ENCODE measurements at regions of chr3 and their contacts with region 1.

Region 1: DNA sequence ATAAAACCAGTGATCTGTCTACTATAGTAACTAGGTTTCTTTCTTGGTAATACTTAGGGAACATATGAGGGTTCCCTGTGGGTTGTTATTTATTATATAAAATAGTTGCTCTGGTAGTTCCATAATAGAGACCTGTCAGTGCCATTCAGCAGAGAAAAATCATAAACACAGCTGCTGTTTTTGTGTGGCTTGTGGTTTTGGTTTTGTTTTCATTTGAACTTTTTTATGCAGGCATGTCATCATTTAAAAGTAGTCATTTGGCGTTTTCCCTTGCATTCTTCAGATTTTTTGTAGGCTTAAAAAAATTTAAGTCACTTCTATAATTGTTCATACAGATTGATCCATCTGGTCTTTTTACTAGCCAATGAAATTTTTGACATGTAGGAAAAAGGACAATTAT is 47.9 kb downstream of the PIK3CA start:
- DNase-seq: no peak
- ATAC-seq: peak in 2 of 8 donors; percentile 31 to 35
- H3K4me3 ChIP-seq: no peak overlapping the region
- H3K27ac ChIP-seq: peak overlapping the region in 2 of 10 donors; percentile 23 to 41
- H3K4me1 ChIP-seq: peaks cover 0 to 58% (median 42%) of the 10 kb centered on the region in 9 donors
- H3K27me3 ChIP-seq: no peaks in the 10 kb centered on the region
- CTCF ChIP-seq: no peak

Region 2: GRCh38 chr3:178090899-178091298 is 1105.2 kb before region 1 on chr3:
- intact Hi-C with region 1: loop called in 1 of 10 experiments (anchors 5 kb)
- DNase-seq: no peak
- ATAC-seq: no peak
- H3K4me3 ChIP-seq: no peak overlapping the region
- H3K27ac ChIP-seq: no peak overlapping the region
- H3K4me1 ChIP-seq: peaks cover 0 to 27% (median 8%) of the 10 kb centered on the region in 9 donors
- H3K27me3 ChIP-seq: no peaks in the 10 kb centered on the region
- CTCF ChIP-seq: no peak

Region 3: DNA sequence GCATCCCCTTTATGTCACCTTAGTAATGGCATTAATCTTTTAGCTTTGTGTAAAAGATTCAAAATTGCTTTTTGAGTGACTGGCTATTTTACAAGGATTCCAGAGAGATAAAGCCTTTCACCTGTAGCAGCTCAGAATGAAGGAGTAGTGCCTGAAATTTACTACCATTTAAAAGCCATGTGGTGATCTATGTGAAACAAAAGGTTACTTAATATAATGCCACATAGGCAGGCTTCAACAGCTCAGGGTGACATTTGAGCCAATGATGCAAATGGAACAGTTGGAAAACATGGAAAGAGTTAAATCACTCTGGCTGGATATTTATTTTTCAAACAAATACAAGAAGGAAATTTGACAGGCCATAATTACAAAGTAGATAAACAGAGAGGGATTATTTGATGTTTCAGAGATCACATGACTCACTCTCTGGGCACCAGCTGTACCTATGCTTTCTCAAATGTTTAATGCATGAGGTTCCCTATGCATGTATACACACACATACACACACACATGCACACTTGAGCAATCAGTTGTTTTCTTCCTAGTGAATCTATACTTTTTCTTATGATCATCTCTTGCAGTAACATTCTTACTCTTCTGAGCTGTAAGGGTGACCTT is 296.0 kb before region 1 on chr3:
- intact Hi-C with region 1: no loop called
- DNase-seq: no peak
- ATAC-seq: no peak
- H3K4me3 ChIP-seq: no peak overlapping the region
- H3K27ac ChIP-seq: no peak overlapping the region
- H3K4me1 ChIP-seq: no peaks in the 10 kb centered on the region
- H3K27me3 ChIP-seq: no peaks in the 10 kb centered on the region
- CTCF ChIP-seq: no peak